Activated CD4-positive, alpha-beta memory T cell treated with anti-CD3 and anti-CD28 coated beads for 36 hours (primary cell): ENCODE measurements at regions of chr10 and their contacts with region 1.

Region 1: GRCh38 chr10:30155401-30155800 is 96.0 kb upstream of the JCAD start:
- DNase-seq: no peak
- H3K4me3 Mint-ChIP-seq: no peak overlapping the region
- H3K27ac Mint-ChIP-seq: no peak overlapping the region
- H3K4me1 Mint-ChIP-seq: no peaks in the 10 kb centered on the region
- H3K27me3 Mint-ChIP-seq: peaks cover 32% of the 10 kb centered on the region

Region 2: GRCh38 chr10:30170824-30171223 is 15.4 kb after region 1 on chr10:
- CTCF ChIA-PET with region 1: no interaction called
- POLR2A ChIA-PET with region 1: no interaction called
- intact Hi-C with region 1: loop called (anchors 1 kb)
- DNase-seq: no peak
- H3K4me3 Mint-ChIP-seq: no peak overlapping the region
- H3K27ac Mint-ChIP-seq: no peak overlapping the region
- H3K4me1 Mint-ChIP-seq: no peaks in the 10 kb centered on the region
- H3K27me3 Mint-ChIP-seq: peaks cover 15% of the 10 kb centered on the region

Region 3: GRCh38 chr10:30324448-30325110 is 169.2 kb after region 1 on chr10:
- CTCF ChIA-PET with region 1: no interaction called
- POLR2A ChIA-PET with region 1: no interaction called
- intact Hi-C with region 1: no loop called
- DNase-seq: no peak
- H3K4me3 Mint-ChIP-seq: no peak overlapping the region
- H3K27ac Mint-ChIP-seq: no peak overlapping the region
- H3K4me1 Mint-ChIP-seq: no peaks in the 10 kb centered on the region
- H3K27me3 Mint-ChIP-seq: no peaks in the 10 kb centered on the region